ENCODE measurements at regions of chr20 and their contacts with region 1.

Region 1: DNA sequence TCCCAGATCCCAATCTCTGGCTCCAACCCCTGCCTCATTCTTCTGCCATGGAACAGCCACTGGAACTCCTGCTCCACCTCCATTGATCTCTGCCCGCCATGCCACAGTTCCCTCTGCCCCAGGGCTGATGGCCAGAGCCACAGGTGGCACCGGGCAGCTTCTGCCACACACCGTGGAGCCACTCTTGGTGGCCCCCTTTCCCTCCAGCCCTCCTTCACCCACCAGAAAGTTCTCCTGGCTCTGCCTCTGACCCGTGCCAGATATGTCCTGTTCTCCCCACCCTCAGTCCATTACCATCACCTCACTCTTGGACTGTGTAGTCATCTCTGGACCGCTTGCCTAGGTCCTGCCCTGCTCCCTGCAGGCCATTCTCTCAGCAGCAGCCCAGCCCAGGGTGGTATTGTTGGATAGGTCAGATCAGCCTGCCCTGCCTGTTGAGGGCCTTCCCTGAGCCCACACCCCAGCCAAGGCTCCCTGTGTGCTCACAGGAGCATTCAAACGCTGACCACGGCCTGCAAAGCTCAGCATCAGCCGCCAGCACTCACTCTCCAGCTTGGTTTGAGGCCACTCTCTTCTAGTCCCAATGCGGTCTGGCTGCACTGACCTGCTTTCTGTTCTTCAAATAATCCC is 16.8 kb upstream of the SYNDIG1 start:
- DNase-seq: no peak
- H3K4me3 ChIP-seq: no peak overlapping the region
- H3K27ac ChIP-seq: no peak overlapping the region
- H3K4me1 ChIP-seq: no peaks in the 10 kb centered on the region
- CTCF ChIP-seq: no peak

Region 2: GRCh38 chr20:22601361-22602141 is 1851.1 kb before region 1 on chr20:
- CTCF ChIA-PET with region 1: interaction called, 14 read pairs
- POLR2A ChIA-PET with region 1: no interaction called
- intact Hi-C with region 1: no loop called
- DNase-seq: no peak
- H3K4me3 ChIP-seq: no peak overlapping the region
- H3K27ac ChIP-seq: no peak overlapping the region
- H3K4me1 ChIP-seq: no peaks in the 10 kb centered on the region
- CTCF ChIP-seq: no peak